ENCODE measurements at regions of chr10 and their contacts with region 1.

Region 1: GRCh38 chr10:116742367-116743265 is at the start of gene HSPA12A:
- DNase-seq: peak in 5 of 9 donors; percentile 25 to 68 (median 29)
- ATAC-seq: peak; percentile 86
- H3K4me3 ChIP-seq: no peak within 1 kb of the TSS
- H3K4me3 Mint-ChIP-seq: peak within 1 kb of the TSS; percentile 17 to 82 (median 66)
- H3K27ac ChIP-seq: no peak within 1 kb of the TSS
- H3K27ac Mint-ChIP-seq: no peak within 1 kb of the TSS
- H3K4me1 ChIP-seq: peaks cover 0 to 11% of the 10 kb centered on the region in 2 donors
- H3K4me1 Mint-ChIP-seq: peaks cover 0 to 5% (median 4%) of the 10 kb centered on the region in 7 donors
- H3K27me3 ChIP-seq: peaks cover 0 to 26% of the 10 kb centered on the region in 2 donors
- H3K27me3 Mint-ChIP-seq: peaks cover 63 to 74% (median 68%) of the 10 kb centered on the region in 5 donors
- total RNA-seq, gene HSPA12A: 0.07 TPM in 1 of 5 experiments, not detected in the others

Region 2: GRCh38 chr10:116721547-116722392 is 20.8 kb before region 1 on chr10:
- CTCF ChIA-PET with region 1: no interaction called
- POLR2A ChIA-PET with region 1: no interaction called
- intact Hi-C with region 1: loop called in 1 of 2 experiments (anchors 2 kb)
- DNase-seq: no peak
- ATAC-seq: no peak
- H3K4me3 ChIP-seq: no peak overlapping the region
- H3K4me3 Mint-ChIP-seq: peak overlapping the region in 3 of 10 donors; percentile 7 to 77 (median 23)
- H3K27ac ChIP-seq: no peak overlapping the region
- H3K27ac Mint-ChIP-seq: no peak overlapping the region
- H3K4me1 ChIP-seq: peaks cover 17 to 29% of the 10 kb centered on the region in 2 donors
- H3K4me1 Mint-ChIP-seq: peaks cover 27 to 57% (median 50%) of the 10 kb centered on the region in 7 donors
- H3K27me3 ChIP-seq: peaks cover 0 to 34% of the 10 kb centered on the region in 2 donors
- H3K27me3 Mint-ChIP-seq: peaks cover 55 to 82% (median 71%) of the 10 kb centered on the region in 5 donors